ENCODE measurements at regions of chr11 and their contacts with region 1.

Region 1: GRCh38 chr11:18105802-18106574 is at the start of gene SAAL1:
- DNase-seq: peak; percentile 73 to 93 (median 91)
- ATAC-seq: peak; percentile 97
- H3K4me3 ChIP-seq: peak within 1 kb of the TSS; percentile 75 to 99
- H3K4me3 Mint-ChIP-seq: peak within 1 kb of the TSS; percentile 86
- H3K27ac ChIP-seq: peak within 1 kb of the TSS; percentile 61 to 62
- H3K27ac Mint-ChIP-seq: peak within 1 kb of the TSS; percentile 87
- H3K4me1 ChIP-seq: peaks cover 10% of the 10 kb centered on the region
- H3K4me1 Mint-ChIP-seq: peaks cover 40% of the 10 kb centered on the region
- H3K27me3 ChIP-seq: no peaks in the 10 kb centered on the region
- H3K27me3 Mint-ChIP-seq: peaks cover 14% of the 10 kb centered on the region
- CTCF ChIP-seq: peak; percentile 86
- total RNA-seq, gene SAAL1: 23.8 to 28.2 TPM

Region 2: GRCh38 chr11:17077520-17078401 is 1028.2 kb before region 1 on chr11 and contains the start of gene RPS13:
- CTCF ChIA-PET with region 1: no interaction called
- POLR2A ChIA-PET with region 1: no interaction called
- intact Hi-C with region 1: loop called (anchors 1 to 5 kb)
- DNase-seq: peak; percentile 88 to 99 (median 95)
- ATAC-seq: peak; percentile 94
- H3K4me3 ChIP-seq: peak within 1 kb of the TSS; percentile 86 to 95
- H3K4me3 Mint-ChIP-seq: peak within 1 kb of the TSS; percentile 99
- H3K27ac ChIP-seq: peak within 1 kb of the TSS; percentile 92 to 96
- H3K27ac Mint-ChIP-seq: peak within 1 kb of the TSS; percentile 99
- H3K4me1 ChIP-seq: peaks cover 25% of the 10 kb centered on the region
- H3K4me1 Mint-ChIP-seq: peaks cover 48% of the 10 kb centered on the region
- H3K27me3 ChIP-seq: no peaks in the 10 kb centered on the region
- H3K27me3 Mint-ChIP-seq: no peaks in the 10 kb centered on the region
- CTCF ChIP-seq: no peak
- total RNA-seq, gene RPS13: 2,112 to 2,169 TPM

Region 3: DNA sequence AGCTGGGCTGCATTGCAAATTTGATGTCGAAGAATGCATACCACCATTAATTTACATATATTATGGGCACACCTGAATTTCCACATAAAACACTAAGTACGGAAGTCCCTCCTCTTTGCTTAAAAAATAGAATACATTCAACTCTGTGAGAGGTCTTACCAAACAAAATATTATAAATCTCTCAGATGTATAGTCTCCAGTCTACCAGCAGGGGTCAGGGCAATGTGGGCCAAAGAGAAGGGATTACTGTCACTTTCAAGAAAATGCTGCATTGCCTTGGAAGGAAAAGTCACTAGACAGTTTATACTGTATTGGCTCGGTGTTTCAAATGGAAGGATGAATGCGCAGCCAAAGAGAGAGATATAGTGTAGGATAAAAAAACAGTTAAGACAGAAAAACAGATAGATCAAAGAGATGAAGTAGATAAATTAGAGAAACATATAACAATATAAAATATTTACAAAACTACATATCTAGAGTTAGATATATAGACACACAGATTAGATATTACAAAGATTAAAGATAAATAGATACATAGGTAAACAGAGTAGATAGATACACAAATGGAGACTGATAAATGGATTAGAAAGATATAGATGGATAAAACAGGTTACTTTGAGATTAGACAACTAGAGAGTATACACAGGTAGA is 114.1 kb before region 1 on chr11:
- CTCF ChIA-PET with region 1: interaction called, 14 read pairs
- POLR2A ChIA-PET with region 1: interaction called, 3 read pairs
- intact Hi-C with region 1: loop called (anchors 1 kb)
- DNase-seq: peak in 8 of 9 experiments; percentile 20 to 67 (median 44)
- ATAC-seq: peak; percentile 81
- H3K4me3 ChIP-seq: no peak overlapping the region
- H3K4me3 Mint-ChIP-seq: no peak overlapping the region
- H3K27ac ChIP-seq: no peak overlapping the region
- H3K27ac Mint-ChIP-seq: no peak overlapping the region
- H3K4me1 ChIP-seq: no peaks in the 10 kb centered on the region
- H3K4me1 Mint-ChIP-seq: no peaks in the 10 kb centered on the region
- H3K27me3 ChIP-seq: no peaks in the 10 kb centered on the region
- H3K27me3 Mint-ChIP-seq: no peaks in the 10 kb centered on the region
- CTCF ChIP-seq: peak; percentile 96

Region 4: DNA sequence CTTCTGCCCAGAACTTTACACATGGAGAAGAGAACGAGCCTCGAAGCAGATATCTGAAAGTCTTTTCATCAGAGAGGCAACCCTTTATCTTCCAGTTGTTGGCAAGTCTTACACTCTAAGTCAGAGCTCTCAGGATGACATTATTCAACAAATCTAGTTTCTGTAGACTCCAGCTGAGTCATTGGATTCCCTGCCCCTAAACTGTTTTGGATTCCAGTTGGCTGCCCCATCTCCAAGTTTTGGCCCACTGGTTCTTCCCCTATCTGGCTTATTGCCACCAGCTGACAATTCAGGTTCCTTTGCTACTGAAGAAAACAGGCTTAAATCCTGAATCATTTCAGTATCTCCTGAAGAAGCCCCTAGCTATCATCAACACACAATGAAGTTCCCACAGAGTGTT is 14.3 kb before region 1 on chr11:
- CTCF ChIA-PET with region 1: interaction called, 10 read pairs
- POLR2A ChIA-PET with region 1: no interaction called
- intact Hi-C with region 1: no loop called
- DNase-seq: no peak
- ATAC-seq: no peak
- H3K4me3 ChIP-seq: no peak overlapping the region
- H3K4me3 Mint-ChIP-seq: no peak overlapping the region
- H3K27ac ChIP-seq: no peak overlapping the region
- H3K27ac Mint-ChIP-seq: no peak overlapping the region
- H3K4me1 ChIP-seq: no peaks in the 10 kb centered on the region
- H3K4me1 Mint-ChIP-seq: peaks cover 3% of the 10 kb centered on the region
- H3K27me3 ChIP-seq: no peaks in the 10 kb centered on the region
- H3K27me3 Mint-ChIP-seq: no peaks in the 10 kb centered on the region
- CTCF ChIP-seq: no peak

Region 5: DNA sequence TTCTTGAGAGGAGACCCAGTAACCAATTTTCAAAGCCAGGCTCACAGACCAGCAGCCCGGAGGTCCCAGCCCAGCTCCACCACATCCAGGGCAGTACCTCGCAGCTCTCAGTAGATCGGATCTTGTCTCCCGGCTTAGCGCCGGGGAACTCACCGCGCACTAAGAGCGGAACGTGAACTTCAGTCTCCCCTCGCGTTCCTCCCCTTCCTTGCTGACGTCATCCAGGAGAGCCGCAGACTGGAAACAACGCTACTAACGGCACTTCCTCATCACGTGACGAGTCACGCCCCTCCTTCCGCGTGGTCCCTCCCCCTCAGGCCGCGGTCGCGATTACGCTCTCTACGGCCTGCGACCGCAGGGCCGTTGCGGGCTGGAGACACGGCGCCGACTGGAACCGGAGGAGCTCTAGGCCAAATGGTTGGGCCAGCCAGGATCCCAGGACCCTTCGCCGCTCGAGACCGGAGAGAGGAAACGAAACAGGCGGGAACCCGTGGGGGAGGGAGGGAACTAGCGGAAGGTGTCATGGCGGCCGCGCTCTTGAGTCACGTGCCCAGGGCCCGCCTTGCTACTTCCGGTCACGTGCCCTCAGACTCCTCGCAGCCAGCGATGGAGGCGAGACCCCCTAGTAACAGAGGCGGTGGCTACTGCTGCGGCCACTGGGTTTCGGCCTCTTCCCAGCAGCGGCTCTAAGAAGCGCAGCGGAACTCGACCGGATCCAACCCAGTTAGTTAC is 216.2 kb after region 1 on chr11 and contains the starts of genes GTF2H1 and HPS5:
- CTCF ChIA-PET with region 1: no interaction called
- POLR2A ChIA-PET with region 1: no interaction called
- intact Hi-C with region 1: loop called (anchors 5 to 10 kb)
- DNase-seq: peak; percentile 91 to 100 (median 96)
- ATAC-seq: peak; percentile 87
- H3K4me3 ChIP-seq: peak within 1 kb of the TSS; percentile 89 to 94
- H3K4me3 Mint-ChIP-seq: peak within 1 kb of the TSS; percentile 100
- H3K27ac ChIP-seq: peak within 1 kb of the TSS; percentile 92 to 99
- H3K27ac Mint-ChIP-seq: peak within 1 kb of the TSS; percentile 100
- H3K4me1 ChIP-seq: peaks cover 51% of the 10 kb centered on the region
- H3K4me1 Mint-ChIP-seq: peaks cover 81% of the 10 kb centered on the region
- H3K27me3 ChIP-seq: no peaks in the 10 kb centered on the region
- H3K27me3 Mint-ChIP-seq: no peaks in the 10 kb centered on the region
- CTCF ChIP-seq: no peak
- total RNA-seq, gene GTF2H1: 11.3 to 14.3 TPM
- total RNA-seq, gene HPS5: 9.9 to 12.6 TPM

Region 6: DNA sequence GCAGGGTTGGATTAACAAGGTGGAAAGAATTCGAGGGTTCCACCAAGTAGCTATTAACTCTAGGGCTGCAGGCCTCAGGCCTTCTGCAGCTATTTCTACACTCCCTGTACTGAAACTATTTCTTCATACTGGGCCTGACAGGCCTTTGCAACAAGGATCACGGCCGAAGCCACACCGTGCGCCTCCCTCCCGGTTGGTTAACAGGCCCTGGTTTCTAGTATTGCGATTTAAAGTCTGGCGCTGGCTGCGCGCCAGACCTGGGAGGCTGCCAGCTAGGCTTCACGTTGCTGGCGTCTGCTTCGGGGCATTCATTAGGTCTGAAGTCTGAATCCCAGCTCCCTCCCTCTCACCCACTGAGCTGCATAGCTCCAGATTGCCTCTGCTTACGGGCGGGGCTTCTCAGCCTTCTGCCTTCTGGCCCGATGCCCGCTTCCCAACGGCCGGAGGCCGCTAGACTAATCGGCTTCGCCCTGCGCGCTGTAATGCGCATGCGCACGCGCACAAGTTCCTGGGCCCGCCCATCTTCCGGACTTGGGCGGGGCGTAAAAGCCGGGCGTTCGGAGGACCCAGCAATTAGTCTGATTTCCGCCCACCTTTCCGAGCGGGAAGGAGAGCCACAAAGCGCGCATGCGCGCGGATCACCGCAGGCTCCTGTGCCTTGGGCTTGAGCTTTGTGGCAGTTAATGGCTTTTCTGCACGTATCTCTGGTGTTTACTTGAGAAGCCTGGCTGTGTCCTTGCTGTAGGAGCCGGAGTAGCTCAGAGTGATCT is 289.9 kb after region 1 on chr11:
- CTCF ChIA-PET with region 1: interaction called, 3 read pairs
- POLR2A ChIA-PET with region 1: interaction called, 3 read pairs
- intact Hi-C with region 1: loop called (anchors 1 to 5 kb)
- DNase-seq: peak; percentile 89 to 98 (median 92)
- ATAC-seq: peak; percentile 54
- H3K4me3 ChIP-seq: peak overlapping the region; percentile 86 to 98
- H3K4me3 Mint-ChIP-seq: peak overlapping the region; percentile 97
- H3K27ac ChIP-seq: peak overlapping the region; percentile 90
- H3K27ac Mint-ChIP-seq: peak overlapping the region; percentile 96
- H3K4me1 ChIP-seq: peaks cover 22% of the 10 kb centered on the region
- H3K4me1 Mint-ChIP-seq: peaks cover 35% of the 10 kb centered on the region
- H3K27me3 ChIP-seq: no peaks in the 10 kb centered on the region
- H3K27me3 Mint-ChIP-seq: no peaks in the 10 kb centered on the region
- CTCF ChIP-seq: no peak

Region 7: GRCh38 chr11:18540207-18541009 is 434.4 kb after region 1 on chr11:
- CTCF ChIA-PET with region 1: no interaction called
- POLR2A ChIA-PET with region 1: no interaction called
- intact Hi-C with region 1: loop called in 1 of 2 experiments (anchors 10 kb)
- DNase-seq: peak in 2 of 9 experiments; percentile 52 to 64
- ATAC-seq: peak; percentile 63
- H3K4me3 ChIP-seq: no peak overlapping the region
- H3K4me3 Mint-ChIP-seq: no peak overlapping the region
- H3K27ac ChIP-seq: no peak overlapping the region
- H3K27ac Mint-ChIP-seq: no peak overlapping the region
- H3K4me1 ChIP-seq: no peaks in the 10 kb centered on the region
- H3K4me1 Mint-ChIP-seq: no peaks in the 10 kb centered on the region
- H3K27me3 ChIP-seq: no peaks in the 10 kb centered on the region
- H3K27me3 Mint-ChIP-seq: no peaks in the 10 kb centered on the region
- CTCF ChIP-seq: peak; percentile 59